Naive thymus-derived CD4-positive, alpha-beta T cell (primary cell): ENCODE measurements at regions of chr5 and their contacts with region 1.

Region 1: GRCh38 chr5:174920906-174921550 is 196.6 kb downstream of the MSX2 start:
- DNase-seq: no peak
- ATAC-seq: no peak
- H3K4me3 ChIP-seq: no peak overlapping the region
- H3K4me3 Mint-ChIP-seq: peak overlapping the region in 1 of 10 donors; percentile 23
- H3K27ac ChIP-seq: no peak overlapping the region
- H3K27ac Mint-ChIP-seq: no peak overlapping the region
- H3K4me1 ChIP-seq: no peaks in the 10 kb centered on the region
- H3K4me1 Mint-ChIP-seq: peaks cover 0 to 8% (median 0%) of the 10 kb centered on the region in 7 donors
- H3K27me3 ChIP-seq: no peaks in the 10 kb centered on the region
- H3K27me3 Mint-ChIP-seq: peaks cover 7 to 17% (median 11%) of the 10 kb centered on the region in 5 donors

Region 2: DNA sequence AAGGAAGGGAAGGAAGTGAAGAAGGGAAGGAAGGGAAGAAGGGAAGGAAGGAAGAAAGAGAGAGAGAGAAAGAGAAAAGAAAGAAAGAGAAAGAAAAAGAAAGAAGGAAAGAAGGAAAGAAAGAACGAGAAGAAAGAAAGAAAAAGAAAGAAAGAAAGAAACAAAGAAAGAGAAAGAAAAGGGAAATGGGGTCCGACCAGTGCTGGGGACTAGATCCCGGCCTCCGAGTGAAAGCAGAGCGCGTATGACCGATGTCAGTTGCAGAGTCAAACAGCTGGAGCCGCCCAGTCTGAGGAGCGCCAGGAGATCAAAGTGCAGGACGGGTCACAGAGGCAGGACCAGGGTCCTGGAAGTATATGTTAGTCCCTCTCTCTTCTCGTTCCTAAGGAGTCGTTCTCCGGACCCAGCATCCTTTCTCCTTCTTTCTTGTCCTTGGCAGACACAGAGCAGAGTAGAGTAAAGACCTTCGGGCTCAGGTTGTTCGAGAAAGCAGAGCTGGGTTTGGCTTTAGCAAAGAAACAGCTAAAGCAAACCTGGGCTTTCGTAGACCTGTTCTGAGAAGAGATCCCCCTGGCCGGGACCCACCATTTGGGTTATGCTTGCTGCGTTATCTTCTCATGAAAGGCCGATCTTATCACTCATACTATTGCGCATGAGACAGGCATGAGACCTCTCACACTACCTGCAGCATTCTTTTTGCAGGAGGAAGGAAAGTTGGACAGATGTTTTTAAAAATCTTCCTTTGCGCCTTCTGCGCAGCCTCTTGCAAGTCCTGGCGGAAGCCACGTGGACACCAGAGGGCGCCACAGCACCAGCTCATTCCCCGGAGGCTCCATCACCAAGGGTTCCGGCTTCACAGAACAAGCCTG is 501.9 kb before region 1 on chr5:
- CTCF ChIA-PET with region 1: no interaction called
- POLR2A ChIA-PET with region 1: no interaction called
- intact Hi-C with region 1: loop called in 1 of 2 experiments (anchors 5 kb)
- DNase-seq: peak; percentile 35 to 75 (median 60)
- ATAC-seq: peak; percentile 81
- H3K4me3 ChIP-seq: no peak overlapping the region
- H3K4me3 Mint-ChIP-seq: peak overlapping the region; percentile 53 to 83 (median 72)
- H3K27ac ChIP-seq: no peak overlapping the region
- H3K27ac Mint-ChIP-seq: peak overlapping the region in 3 of 9 donors; percentile 26 to 55 (median 43)
- H3K4me1 ChIP-seq: no peaks in the 10 kb centered on the region
- H3K4me1 Mint-ChIP-seq: peaks cover 6 to 18% (median 16%) of the 10 kb centered on the region in 7 donors
- H3K27me3 ChIP-seq: no peaks in the 10 kb centered on the region
- H3K27me3 Mint-ChIP-seq: peaks cover 16 to 37% (median 24%) of the 10 kb centered on the region in 5 donors